Mammary epithelial cell (primary cell): ENCODE measurements at regions of chr18 and their contacts with region 1.

Region 1: GRCh38 chr18:63676526-63676925 is 14.8 kb upstream of the SERPINB3 start:
- DNase-seq: peak; percentile 35
- H3K4me3 ChIP-seq: no peak overlapping the region
- H3K27ac ChIP-seq: no peak overlapping the region
- H3K4me1 ChIP-seq: peaks cover 8% of the 10 kb centered on the region
- H3K27me3 ChIP-seq: no peaks in the 10 kb centered on the region
- CTCF ChIP-seq: peak; percentile 78 to 85

Region 2: GRCh38 chr18:63518178-63519012 is 158.1 kb before region 1 on chr18:
- CTCF ChIA-PET with region 1: no interaction called
- dilution Hi-C with region 1: no loop called
- in situ Hi-C with region 1: no loop called
- intact Hi-C with region 1: loop called (anchors 1 kb)
- DNase-seq: peak; percentile 64
- H3K4me3 ChIP-seq: no peak overlapping the region
- H3K27ac ChIP-seq: no peak overlapping the region
- H3K4me1 ChIP-seq: no peaks in the 10 kb centered on the region
- H3K27me3 ChIP-seq: no peaks in the 10 kb centered on the region
- CTCF ChIP-seq: peak; percentile 55 to 67

Region 3: GRCh38 chr18:63588890-63589289 is 87.6 kb before region 1 on chr18:
- CTCF ChIA-PET with region 1: no interaction called
- dilution Hi-C with region 1: no loop called
- in situ Hi-C with region 1: no loop called
- intact Hi-C with region 1: loop called (anchors 1 kb)
- DNase-seq: no peak
- H3K4me3 ChIP-seq: no peak overlapping the region
- H3K27ac ChIP-seq: no peak overlapping the region
- H3K4me1 ChIP-seq: peaks cover 30% of the 10 kb centered on the region
- H3K27me3 ChIP-seq: no peaks in the 10 kb centered on the region
- CTCF ChIP-seq: no peak

Region 4: DNA sequence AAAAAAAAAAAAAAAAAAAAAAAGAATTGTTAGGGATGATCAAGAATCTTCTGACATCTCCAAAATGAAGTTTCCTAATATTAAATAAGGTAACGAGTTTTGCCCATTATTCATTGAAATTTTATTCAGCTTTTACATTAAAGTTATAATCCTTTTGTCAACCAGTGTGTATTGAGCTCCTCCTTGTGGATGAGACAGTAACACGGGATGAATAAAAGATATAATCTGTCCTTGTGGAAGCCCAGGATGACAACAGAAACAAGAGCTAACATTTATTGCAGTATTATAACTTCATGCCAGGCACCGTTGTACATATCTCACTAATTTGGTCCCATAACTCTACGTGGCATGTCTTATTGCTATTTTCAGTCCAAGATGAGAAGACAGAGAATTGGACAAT is 65.2 kb after region 1 on chr18:
- CTCF ChIA-PET with region 1: no interaction called
- dilution Hi-C with region 1: no loop called
- in situ Hi-C with region 1: no loop called
- intact Hi-C with region 1: loop called (anchors 2 kb)
- DNase-seq: peak; percentile 40
- H3K4me3 ChIP-seq: no peak overlapping the region
- H3K27ac ChIP-seq: no peak overlapping the region
- H3K4me1 ChIP-seq: peaks cover 11% of the 10 kb centered on the region
- H3K27me3 ChIP-seq: no peaks in the 10 kb centered on the region
- CTCF ChIP-seq: peak; percentile 77 to 80

Region 5: GRCh38 chr18:63753676-63754075 is 77.2 kb after region 1 on chr18:
- CTCF ChIA-PET with region 1: no interaction called
- dilution Hi-C with region 1: no loop called
- in situ Hi-C with region 1: no loop called
- intact Hi-C with region 1: no loop called
- DNase-seq: no peak
- H3K4me3 ChIP-seq: no peak overlapping the region
- H3K27ac ChIP-seq: no peak overlapping the region
- H3K4me1 ChIP-seq: no peaks in the 10 kb centered on the region
- H3K27me3 ChIP-seq: no peaks in the 10 kb centered on the region
- CTCF ChIP-seq: no peak

Region 6: DNA sequence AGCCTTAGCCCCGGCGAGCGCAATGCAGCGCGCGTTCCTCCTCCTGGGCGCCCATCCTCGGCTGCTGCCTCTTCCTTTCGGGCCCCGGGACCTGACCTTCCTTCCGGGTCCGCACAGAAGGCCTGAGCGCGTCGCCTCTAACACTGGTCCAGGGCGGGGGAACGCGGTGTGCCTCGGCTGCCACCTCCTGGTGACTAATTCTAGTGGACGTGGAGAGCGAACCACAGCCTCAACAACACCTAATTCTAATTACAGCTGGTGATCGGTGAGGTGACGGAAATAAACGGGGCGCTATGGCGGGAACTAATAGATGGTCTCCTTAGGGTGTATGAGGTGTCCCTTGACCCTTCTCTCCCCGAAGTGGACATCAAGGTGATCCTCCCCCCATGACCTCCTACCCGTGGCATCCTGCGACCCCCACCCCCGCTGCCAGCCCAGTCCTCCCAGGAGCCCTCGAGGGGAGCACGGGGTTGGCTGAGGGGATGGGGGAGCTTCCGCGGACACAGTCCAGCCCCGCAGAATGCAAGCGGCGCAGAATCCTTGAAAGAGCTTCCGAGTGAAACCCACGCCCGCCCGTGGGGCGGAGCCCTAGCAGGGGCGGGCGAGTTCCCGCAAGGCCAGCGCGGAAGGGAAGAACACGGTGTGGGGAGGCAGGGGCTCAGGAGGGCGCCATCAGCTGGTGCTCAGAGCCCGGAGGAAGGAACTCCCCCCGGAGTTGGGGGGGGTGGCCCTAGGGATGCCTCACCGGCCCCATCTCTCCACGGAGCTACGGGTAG is 259.8 kb after region 1 on chr18:
- CTCF ChIA-PET with region 1: no interaction called
- dilution Hi-C with region 1: no loop called
- in situ Hi-C with region 1: no loop called
- intact Hi-C with region 1: loop called (anchors 2 kb)
- DNase-seq: peak; percentile 70
- H3K4me3 ChIP-seq: peak overlapping the region; percentile 60 to 81 (median 62)
- H3K27ac ChIP-seq: no peak overlapping the region
- H3K4me1 ChIP-seq: peaks cover 12% of the 10 kb centered on the region
- H3K27me3 ChIP-seq: no peaks in the 10 kb centered on the region
- CTCF ChIP-seq: peak; percentile 67 to 88